Activated CD8-positive, alpha-beta T cell treated with anti-CD3 and anti-CD28 coated beads for 36 hours (primary cell): ENCODE measurements at regions of chr19 and their contacts with region 1.

Region 1: GRCh38 chr19:54159352-54160181 is at the start of gene LENG1:
- DNase-seq: peak; percentile 100
- ATAC-seq: peak; percentile 89
- H3K4me3 Mint-ChIP-seq: peak within 1 kb of the TSS; percentile 86
- H3K27ac Mint-ChIP-seq: peak within 1 kb of the TSS; percentile 97
- H3K4me1 Mint-ChIP-seq: peaks cover 48% of the 10 kb centered on the region
- H3K27me3 Mint-ChIP-seq: peaks cover 6% of the 10 kb centered on the region
- CTCF ChIP-seq: no peak
- total RNA-seq, gene LENG1: 3.3 to 4.0 TPM

Region 2: GRCh38 chr19:54115109-54116063 is 44.2 kb before region 1 on chr19 and contains the starts of genes PRPF31 and TFPT:
- CTCF ChIA-PET with region 1: interaction called, 4 read pairs
- POLR2A ChIA-PET with region 1: interaction called, 10 read pairs
- intact Hi-C with region 1: no loop called
- DNase-seq: peak; percentile 99
- ATAC-seq: peak; percentile 90
- H3K4me3 Mint-ChIP-seq: peak within 1 kb of the TSS; percentile 94
- H3K27ac Mint-ChIP-seq: peak within 1 kb of the TSS; percentile 97
- H3K4me1 Mint-ChIP-seq: peaks cover 24% of the 10 kb centered on the region
- H3K27me3 Mint-ChIP-seq: no peaks in the 10 kb centered on the region
- CTCF ChIP-seq: no peak
- total RNA-seq, gene PRPF31: 81.1 to 85.2 TPM
- total RNA-seq, gene TFPT: 27.7 to 28.1 TPM

Region 3: DNA sequence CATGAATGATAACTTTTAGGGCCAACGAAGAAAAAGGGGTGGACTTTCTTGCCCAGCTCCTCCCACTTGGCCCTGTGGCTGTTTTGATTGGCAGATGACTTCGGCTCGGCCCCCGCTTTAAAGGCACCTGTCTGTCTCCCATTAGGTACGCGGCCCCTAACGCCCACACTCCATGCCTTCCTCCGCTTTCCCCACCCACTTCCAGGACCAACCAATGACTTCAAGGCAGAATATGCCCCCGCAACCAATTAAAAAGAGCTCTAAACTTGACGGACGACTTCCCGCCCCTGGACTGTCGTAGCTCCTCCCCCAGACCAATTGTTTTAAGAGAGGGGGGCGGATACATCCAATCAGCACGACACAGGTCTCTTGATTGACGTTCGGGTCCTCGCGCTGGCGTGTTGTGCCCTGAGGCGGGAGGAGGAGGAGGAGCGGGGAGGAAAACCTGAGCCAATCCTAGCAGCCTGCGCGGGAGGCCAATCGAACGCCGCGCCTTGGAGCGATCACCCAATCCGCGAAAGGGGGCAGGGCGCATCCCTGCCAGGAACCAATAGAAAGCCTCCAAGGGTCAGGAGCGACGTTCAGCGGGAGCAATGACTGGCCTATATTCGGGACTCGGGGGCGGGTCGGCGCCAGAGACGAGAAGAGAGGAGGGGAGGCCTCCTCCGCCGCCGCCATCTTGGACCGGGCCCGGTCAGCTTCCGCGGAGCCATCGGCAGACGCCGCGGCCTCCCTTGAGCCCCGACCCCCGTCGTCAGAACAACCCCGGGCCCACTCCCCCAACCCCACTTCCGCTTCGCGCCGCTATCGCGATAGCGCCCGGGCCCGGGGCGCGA is 22.3 kb before region 1 on chr19 and contains the start of gene CNOT3:
- CTCF ChIA-PET with region 1: interaction called, 11 read pairs
- POLR2A ChIA-PET with region 1: interaction called, 9 read pairs
- intact Hi-C with region 1: no loop called
- DNase-seq: peak; percentile 100
- ATAC-seq: peak; percentile 85
- H3K4me3 Mint-ChIP-seq: peak within 1 kb of the TSS; percentile 87
- H3K27ac Mint-ChIP-seq: peak within 1 kb of the TSS; percentile 92
- H3K4me1 Mint-ChIP-seq: peaks cover 47% of the 10 kb centered on the region
- H3K27me3 Mint-ChIP-seq: no peaks in the 10 kb centered on the region
- CTCF ChIP-seq: no peak
- total RNA-seq, gene CNOT3: 48.8 to 50.7 TPM

Region 4: DNA sequence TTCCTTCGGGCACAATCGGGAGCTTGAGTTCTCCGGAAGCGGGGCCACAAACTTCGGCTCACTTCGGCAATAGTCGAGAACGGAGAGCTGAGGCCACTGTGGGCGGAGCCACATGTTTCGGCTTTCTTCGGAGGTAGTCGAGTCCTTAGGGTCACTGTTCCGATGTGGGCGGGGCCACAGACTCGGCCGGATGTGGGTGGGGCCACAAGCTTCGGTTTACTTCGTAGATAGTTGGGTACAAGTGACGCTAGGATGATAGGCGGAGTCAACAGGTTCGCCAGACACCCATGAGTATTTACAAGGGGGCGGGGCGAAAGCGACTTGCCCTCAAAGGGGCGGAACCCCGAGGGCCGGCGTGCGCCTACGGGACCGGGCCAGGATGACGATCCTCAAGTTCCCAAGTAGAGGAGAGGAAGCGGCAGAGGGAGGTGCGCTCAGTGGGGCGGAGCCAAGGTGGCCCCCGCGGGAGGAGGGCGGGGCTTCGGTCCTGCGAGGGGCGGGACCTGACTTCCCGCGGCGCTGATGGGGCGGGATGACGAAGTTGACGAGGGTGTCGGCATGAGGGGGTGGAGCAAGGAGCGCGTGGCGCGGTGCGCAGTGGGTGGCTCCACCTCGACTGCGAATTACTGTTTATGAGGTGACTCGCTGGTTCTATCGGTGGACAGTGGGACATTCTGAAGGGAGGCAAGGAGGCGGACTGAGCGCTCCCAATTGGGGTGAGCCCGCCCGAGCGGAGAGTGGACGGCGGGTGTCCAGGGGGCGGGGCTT is 30.4 kb after region 1 on chr19:
- CTCF ChIA-PET with region 1: interaction called, 8 read pairs
- POLR2A ChIA-PET with region 1: interaction called, 11 read pairs
- intact Hi-C with region 1: no loop called
- DNase-seq: peak; percentile 100
- ATAC-seq: peak; percentile 66
- H3K4me3 Mint-ChIP-seq: peak overlapping the region; percentile 75
- H3K27ac Mint-ChIP-seq: peak overlapping the region; percentile 95
- H3K4me1 Mint-ChIP-seq: peaks cover 28% of the 10 kb centered on the region
- H3K27me3 Mint-ChIP-seq: no peaks in the 10 kb centered on the region
- CTCF ChIP-seq: no peak

Region 5: GRCh38 chr19:54203151-54203611 is 43.6 kb after region 1 on chr19:
- CTCF ChIA-PET with region 1: no interaction called
- POLR2A ChIA-PET with region 1: interaction called, 33 read pairs
- intact Hi-C with region 1: no loop called
- DNase-seq: no peak
- ATAC-seq: no peak
- H3K4me3 Mint-ChIP-seq: peak overlapping the region; percentile 87
- H3K27ac Mint-ChIP-seq: peak overlapping the region; percentile 62
- H3K4me1 Mint-ChIP-seq: peaks cover 68% of the 10 kb centered on the region
- H3K27me3 Mint-ChIP-seq: no peaks in the 10 kb centered on the region
- CTCF ChIP-seq: no peak

Region 6: DNA sequence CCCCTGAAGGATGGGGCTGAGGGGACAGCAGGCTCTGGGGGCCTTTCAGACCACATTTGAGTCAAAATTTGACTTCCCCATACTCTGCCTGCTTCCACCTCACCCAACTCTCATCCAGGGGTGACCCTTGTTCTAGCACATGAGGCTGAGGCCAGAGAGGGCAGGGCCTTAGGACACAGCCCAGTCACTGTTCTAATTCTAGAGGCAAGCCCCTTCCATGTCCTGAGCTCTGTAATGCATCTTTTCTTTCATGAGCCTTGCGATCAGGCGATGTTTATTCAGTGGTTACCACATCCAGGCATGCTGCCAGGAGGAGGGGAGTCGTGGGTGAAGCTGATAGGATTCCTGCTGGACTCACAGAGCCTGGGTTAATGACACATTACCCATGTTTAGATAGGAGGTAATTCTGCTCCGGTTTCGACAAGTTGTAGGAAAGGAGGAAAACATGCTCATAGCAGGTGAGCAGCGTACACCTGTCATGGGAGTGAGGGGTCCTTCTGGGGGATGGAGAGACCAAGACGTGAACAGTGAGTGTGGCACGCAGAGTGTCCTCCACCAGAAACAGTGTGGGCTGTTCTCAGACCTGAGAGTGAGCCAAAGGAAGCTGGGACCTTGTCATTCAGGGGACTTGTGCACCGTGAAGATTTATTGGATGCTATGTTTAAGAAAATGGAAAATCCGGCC is 50.4 kb after region 1 on chr19:
- CTCF ChIA-PET with region 1: no interaction called
- POLR2A ChIA-PET with region 1: interaction called, 16 read pairs
- intact Hi-C with region 1: no loop called
- DNase-seq: peak; percentile 52
- ATAC-seq: no peak
- H3K4me3 Mint-ChIP-seq: no peak overlapping the region
- H3K27ac Mint-ChIP-seq: peak overlapping the region; percentile 49
- H3K4me1 Mint-ChIP-seq: peaks cover 63% of the 10 kb centered on the region
- H3K27me3 Mint-ChIP-seq: no peaks in the 10 kb centered on the region
- CTCF ChIP-seq: no peak

Region 7: GRCh38 chr19:54312436-54313377 is 153.1 kb after region 1 on chr19 and contains the start of gene LILRA5:
- CTCF ChIA-PET with region 1: no interaction called
- POLR2A ChIA-PET with region 1: no interaction called
- intact Hi-C with region 1: no loop called
- DNase-seq: no peak
- ATAC-seq: no peak
- H3K4me3 Mint-ChIP-seq: no peak within 1 kb of the TSS
- H3K27ac Mint-ChIP-seq: no peak within 1 kb of the TSS
- H3K4me1 Mint-ChIP-seq: no peaks in the 10 kb centered on the region
- H3K27me3 Mint-ChIP-seq: peaks cover 18% of the 10 kb centered on the region
- CTCF ChIP-seq: no peak
- total RNA-seq, gene LILRA5: not detected